ENCODE measurements at regions of chr3 and their contacts with region 1.

Region 1: DNA sequence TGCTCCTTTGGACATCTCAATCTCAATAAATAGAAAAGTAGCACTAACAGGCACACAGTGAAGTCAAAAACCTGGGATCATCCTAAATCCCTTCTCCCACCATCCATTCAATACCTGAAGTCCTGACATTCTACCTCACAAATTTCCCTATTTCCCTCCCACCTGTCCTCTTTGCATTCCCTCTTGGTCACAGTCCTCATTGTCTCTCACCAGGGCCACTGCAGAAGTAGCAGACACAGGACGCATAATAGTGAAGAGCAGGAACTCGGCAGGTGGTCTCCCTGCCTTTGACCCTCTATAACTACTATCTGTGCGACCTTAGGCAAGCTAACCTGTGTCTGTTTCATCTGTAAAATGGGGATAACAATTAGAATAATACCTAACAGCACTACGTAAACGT is 2.3 kb downstream of the THOC7 start:
- DNase-seq: no peak
- H3K4me3 ChIP-seq: no peak overlapping the region
- H3K27ac ChIP-seq: no peak overlapping the region
- H3K4me1 ChIP-seq: peaks cover 13% of the 10 kb centered on the region
- H3K27me3 ChIP-seq: no peaks in the 10 kb centered on the region
- CTCF ChIP-seq: no peak

Region 2: GRCh38 chr3:63478990-63479660 is 382.2 kb before region 1 on chr3:
- CTCF ChIA-PET with region 1: no interaction called
- POLR2A ChIA-PET with region 1: no interaction called
- intact Hi-C with region 1: no loop called
- DNase-seq: no peak
- H3K4me3 ChIP-seq: no peak overlapping the region
- H3K27ac ChIP-seq: no peak overlapping the region
- H3K4me1 ChIP-seq: no peaks in the 10 kb centered on the region
- H3K27me3 ChIP-seq: 0 out of 2 replicates have a peak, but pooled peaks cover 3% of the 10 kb centered on the region
- CTCF ChIP-seq: no peak

Region 3: DNA sequence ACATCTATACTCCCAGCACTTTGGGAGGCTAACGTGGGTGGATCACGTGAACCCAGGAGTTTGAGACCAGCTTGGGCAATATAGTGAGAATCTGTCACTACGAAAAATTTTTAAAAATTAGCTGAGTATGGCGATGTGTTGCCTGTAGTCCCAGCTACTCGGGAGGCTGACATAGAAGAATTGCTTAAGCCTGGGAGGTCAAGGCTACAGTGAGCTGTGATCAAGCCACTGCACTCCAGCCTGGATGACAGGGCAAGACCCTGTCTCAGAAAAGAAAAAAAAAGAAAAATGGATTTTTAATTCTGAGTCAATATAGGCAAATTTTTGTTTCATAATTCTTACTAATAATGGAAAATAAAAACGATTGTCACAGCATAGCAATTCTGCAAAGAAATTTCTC is 28.9 kb before region 1 on chr3:
- CTCF ChIA-PET with region 1: no interaction called
- POLR2A ChIA-PET with region 1: interaction called, 15 read pairs
- intact Hi-C with region 1: no loop called
- DNase-seq: no peak
- H3K4me3 ChIP-seq: no peak overlapping the region
- H3K27ac ChIP-seq: no peak overlapping the region
- H3K4me1 ChIP-seq: no peaks in the 10 kb centered on the region
- H3K27me3 ChIP-seq: no peaks in the 10 kb centered on the region
- CTCF ChIP-seq: no peak

Measured in PC-9 (cell line).